ENCODE measurements at regions of chr7 and their contacts with region 1.

Region 1: GRCh38 chr7:26585081-26585641 is 279.2 kb downstream of the SKAP2 start:
- DNase-seq: peak; percentile 42
- ATAC-seq: peak; percentile 71
- H3K4me3 ChIP-seq: no peak overlapping the region
- H3K27ac ChIP-seq: no peak overlapping the region
- H3K4me1 ChIP-seq: 0 out of 2 replicates have a peak, but pooled peaks cover 3% of the 10 kb centered on the region
- H3K27me3 ChIP-seq: no peaks in the 10 kb centered on the region
- CTCF ChIP-seq: peak; percentile 40; the same call in 1 of the 2 replicates

Region 2: DNA sequence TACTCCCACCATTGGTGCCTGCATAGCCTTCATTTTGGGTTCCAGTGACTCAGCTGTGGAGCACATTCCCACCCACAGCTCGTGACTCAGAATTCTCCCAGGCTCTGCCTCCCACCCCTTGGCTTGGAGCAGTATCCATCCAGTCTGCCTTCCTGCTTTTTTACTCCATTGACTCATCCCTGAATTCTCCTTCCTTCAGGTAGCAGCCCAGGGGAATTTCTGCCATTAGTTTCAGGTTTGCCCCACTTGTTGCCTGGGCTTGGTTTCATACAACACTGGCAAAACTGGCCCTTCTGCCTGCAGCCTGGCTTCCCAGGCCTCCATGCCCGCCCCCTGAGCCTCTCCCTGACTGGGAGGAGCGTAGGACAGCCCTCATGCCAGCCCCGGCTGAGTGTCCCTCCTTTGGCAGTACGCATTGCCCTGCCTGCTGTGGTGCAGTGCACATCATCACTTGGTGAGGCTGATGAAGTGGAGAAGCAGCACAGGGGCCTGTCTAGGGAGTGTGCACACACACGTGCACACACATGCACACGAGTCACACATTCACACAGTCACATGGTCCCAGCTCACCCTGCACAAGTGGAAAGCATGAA is 238.5 kb before region 1 on chr7:
- CTCF ChIA-PET with region 1: interaction called, 15 read pairs
- POLR2A ChIA-PET with region 1: no interaction called
- intact Hi-C with region 1: no loop called
- DNase-seq: peak; percentile 76
- ATAC-seq: peak; percentile 73
- H3K4me3 ChIP-seq: no peak overlapping the region
- H3K27ac ChIP-seq: peak overlapping the region; percentile 73
- H3K4me1 ChIP-seq: peaks cover 27% of the 10 kb centered on the region
- H3K27me3 ChIP-seq: no peaks in the 10 kb centered on the region
- CTCF ChIP-seq: no peak

Region 3: GRCh38 chr7:26534649-26535482 is 50.3 kb before region 1 on chr7:
- CTCF ChIA-PET with region 1: no interaction called
- POLR2A ChIA-PET with region 1: no interaction called
- intact Hi-C with region 1: no loop called
- DNase-seq: no peak
- ATAC-seq: peak; percentile 51
- H3K4me3 ChIP-seq: no peak overlapping the region
- H3K27ac ChIP-seq: no peak overlapping the region
- H3K4me1 ChIP-seq: no peaks in the 10 kb centered on the region
- H3K27me3 ChIP-seq: no peaks in the 10 kb centered on the region
- CTCF ChIP-seq: no peak

Region 4: DNA sequence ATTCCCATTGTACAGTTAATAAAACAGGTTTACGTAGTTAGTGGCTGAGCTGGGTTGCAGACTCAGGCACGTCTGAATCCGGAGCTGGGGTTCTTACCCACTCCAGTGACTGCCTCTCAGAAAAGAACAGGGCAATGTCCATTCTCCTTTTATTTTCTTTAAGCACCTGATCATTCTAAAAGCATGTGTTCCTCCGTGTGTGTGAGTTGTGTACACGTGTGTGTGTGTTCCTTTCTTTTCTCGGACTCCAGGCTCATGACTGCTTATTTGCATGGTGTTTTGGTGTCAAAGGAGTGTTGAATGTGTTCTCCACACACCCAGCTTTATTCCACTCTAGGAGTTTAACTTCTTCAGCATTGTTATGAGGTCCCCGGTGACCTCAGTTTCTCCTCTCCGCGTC is 33.4 kb before region 1 on chr7:
- CTCF ChIA-PET with region 1: no interaction called
- POLR2A ChIA-PET with region 1: no interaction called
- intact Hi-C with region 1: no loop called
- DNase-seq: no peak
- ATAC-seq: no peak
- H3K4me3 ChIP-seq: no peak overlapping the region
- H3K27ac ChIP-seq: peak overlapping the region; percentile 100; the same call in 1 of the 2 replicates
- H3K4me1 ChIP-seq: peaks cover 41% of the 10 kb centered on the region
- H3K27me3 ChIP-seq: no peaks in the 10 kb centered on the region
- CTCF ChIP-seq: no peak

Region 5: DNA sequence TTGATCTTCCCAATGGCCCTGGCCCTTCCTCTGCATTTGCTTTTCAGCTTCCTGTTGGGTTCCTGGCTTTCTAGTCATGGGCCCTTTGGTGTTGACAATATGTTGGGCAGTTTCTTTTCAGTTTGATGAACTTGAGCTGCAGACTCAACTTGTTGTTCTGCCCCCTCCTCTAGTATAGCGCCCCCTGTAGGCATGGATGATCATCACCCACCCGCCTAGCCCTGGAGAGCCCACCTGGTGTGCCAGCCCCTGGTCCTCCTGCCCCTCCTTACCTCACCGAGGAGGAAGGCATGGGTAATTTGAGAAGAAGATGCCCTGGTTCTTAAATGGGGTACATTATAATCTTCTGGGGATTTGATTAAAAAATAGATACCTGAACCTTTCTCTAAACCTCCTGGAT is 22.3 kb before region 1 on chr7:
- CTCF ChIA-PET with region 1: no interaction called
- POLR2A ChIA-PET with region 1: no interaction called
- intact Hi-C with region 1: loop called (anchors 2 kb)
- DNase-seq: no peak
- ATAC-seq: no peak
- H3K4me3 ChIP-seq: no peak overlapping the region
- H3K27ac ChIP-seq: no peak overlapping the region
- H3K4me1 ChIP-seq: peaks cover 24% of the 10 kb centered on the region
- H3K27me3 ChIP-seq: no peaks in the 10 kb centered on the region
- CTCF ChIP-seq: peak; percentile 44